Activated B cell treated with CpG ODN at 0.5 μM for 24 hours (primary cell): ENCODE measurements at regions of chr9 and their contacts with region 1.

Region 1: DNA sequence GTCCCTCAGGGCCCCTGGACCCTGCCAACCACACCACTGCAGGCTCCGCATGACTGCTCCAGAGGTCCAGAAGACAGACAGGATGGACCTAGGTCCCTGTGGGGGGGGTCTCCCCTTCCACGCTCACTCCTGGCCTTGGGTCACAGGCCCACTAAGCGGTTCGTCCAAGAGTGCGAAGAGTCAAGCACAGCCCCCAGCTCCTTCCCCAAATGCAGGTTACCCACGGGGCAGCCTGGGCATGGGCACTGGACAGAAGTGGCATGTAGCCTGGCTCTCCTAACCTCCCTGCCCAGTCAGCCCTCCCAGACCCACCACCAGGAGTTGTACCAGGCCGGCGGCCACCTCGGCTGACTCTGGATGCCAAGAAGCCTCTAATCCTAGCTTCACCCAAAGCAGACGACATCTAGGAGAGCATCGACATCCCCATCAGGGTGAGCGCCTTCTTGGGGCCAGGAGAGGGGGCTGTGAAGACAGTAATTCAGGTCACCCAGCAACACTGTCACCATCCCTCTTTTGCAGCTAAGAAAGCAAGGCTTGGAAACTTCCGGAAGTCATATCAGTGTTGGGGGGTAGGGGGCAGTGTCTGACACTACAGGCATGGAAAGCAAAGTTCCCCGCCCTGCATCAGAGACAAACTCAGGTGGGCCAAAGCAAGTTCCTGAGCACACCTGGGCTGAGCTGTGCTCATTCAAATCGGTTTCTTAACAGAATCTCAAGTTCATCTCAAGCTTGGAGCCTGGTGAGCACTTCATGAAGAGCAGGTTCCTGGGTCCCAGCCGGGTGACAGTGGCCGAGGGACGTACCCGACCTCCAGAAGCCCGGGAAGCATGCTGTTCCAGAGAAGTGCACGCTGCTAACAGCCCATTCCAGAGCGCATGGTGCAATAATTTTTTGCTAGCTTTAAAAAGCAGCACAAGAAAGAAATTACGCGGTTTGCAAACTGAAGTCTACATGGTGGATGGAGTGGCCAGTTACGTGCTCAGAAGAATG is 68.7 kb downstream of the SEMA4D start:
- DNase-seq: no peak
- ATAC-seq: peak; percentile 48
- H3K4me3 Mint-ChIP-seq: no peak overlapping the region
- H3K27ac Mint-ChIP-seq: peak overlapping the region; percentile 63
- H3K4me1 Mint-ChIP-seq: peaks cover 93% of the 10 kb centered on the region
- H3K27me3 Mint-ChIP-seq: no peaks in the 10 kb centered on the region
- CTCF ChIP-seq: no peak

Region 2: DNA sequence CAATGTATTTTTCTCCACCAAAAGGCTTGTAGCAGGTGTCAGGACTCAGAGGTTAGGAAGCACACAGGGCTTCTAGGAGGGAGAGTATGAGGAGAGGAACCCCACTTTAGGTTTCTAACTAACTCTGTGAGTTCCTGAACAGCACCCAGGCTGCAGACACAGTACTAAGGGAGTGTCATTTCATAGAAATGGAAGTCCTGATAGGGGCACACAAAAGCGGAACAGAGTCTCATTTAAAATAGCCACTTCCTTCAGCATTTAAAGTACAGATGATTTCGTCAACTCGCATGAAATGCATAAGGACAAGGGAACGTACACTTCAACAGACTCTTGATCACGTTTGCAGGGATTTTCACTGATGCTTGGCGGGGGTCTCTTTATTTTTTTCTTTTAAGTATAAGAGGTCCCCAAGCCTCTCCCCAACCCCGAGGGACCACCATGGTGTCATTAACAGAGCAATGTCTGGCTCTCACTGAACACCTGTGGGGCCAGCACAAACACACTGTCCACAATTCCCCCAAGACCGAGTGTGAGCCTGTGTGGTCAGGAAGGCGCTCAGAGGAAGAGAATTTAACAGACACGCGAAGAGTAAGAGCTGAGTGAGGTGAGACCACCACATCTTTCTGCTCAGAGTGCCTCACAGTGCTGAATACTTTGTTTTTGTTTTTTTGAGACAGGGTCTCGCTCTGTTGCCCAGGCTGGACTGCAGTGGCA is 28.6 kb before region 1 on chr9:
- CTCF ChIA-PET with region 1: interaction called, 4 read pairs
- POLR2A ChIA-PET with region 1: interaction called, 12 read pairs
- intact Hi-C with region 1: loop called (anchors 2 kb)
- DNase-seq: peak; percentile 35
- ATAC-seq: peak; percentile 83
- H3K4me3 Mint-ChIP-seq: peak overlapping the region; percentile 68
- H3K27ac Mint-ChIP-seq: peak overlapping the region; percentile 90
- H3K4me1 Mint-ChIP-seq: peaks cover 62% of the 10 kb centered on the region
- H3K27me3 Mint-ChIP-seq: no peaks in the 10 kb centered on the region
- CTCF ChIP-seq: no peak

Region 3: GRCh38 chr9:89418882-89419640 is 10.1 kb before region 1 on chr9:
- CTCF ChIA-PET with region 1: interaction called, 5 read pairs
- POLR2A ChIA-PET with region 1: interaction called, 4 read pairs
- intact Hi-C with region 1: loop called (anchors 1 kb)
- DNase-seq: peak; percentile 53
- ATAC-seq: peak; percentile 83
- H3K4me3 Mint-ChIP-seq: peak overlapping the region; percentile 84
- H3K27ac Mint-ChIP-seq: peak overlapping the region; percentile 94
- H3K4me1 Mint-ChIP-seq: peaks cover 73% of the 10 kb centered on the region
- H3K27me3 Mint-ChIP-seq: no peaks in the 10 kb centered on the region
- CTCF ChIP-seq: no peak

Region 4: GRCh38 chr9:89483592-89484522 is 54.7 kb after region 1 on chr9:
- CTCF ChIA-PET with region 1: no interaction called
- POLR2A ChIA-PET with region 1: no interaction called
- intact Hi-C with region 1: loop called (anchors 2 kb)
- DNase-seq: peak; percentile 52
- ATAC-seq: peak; percentile 82
- H3K4me3 Mint-ChIP-seq: peak overlapping the region; percentile 80
- H3K27ac Mint-ChIP-seq: peak overlapping the region; percentile 79
- H3K4me1 Mint-ChIP-seq: peaks cover 79% of the 10 kb centered on the region
- H3K27me3 Mint-ChIP-seq: no peaks in the 10 kb centered on the region
- CTCF ChIP-seq: no peak

Region 5: GRCh38 chr9:89522261-89522958 is 93.2 kb after region 1 on chr9:
- CTCF ChIA-PET with region 1: interaction called, 10 read pairs
- POLR2A ChIA-PET with region 1: no interaction called
- intact Hi-C with region 1: no loop called
- DNase-seq: peak; percentile 49
- ATAC-seq: peak; percentile 93
- H3K4me3 Mint-ChIP-seq: peak overlapping the region; percentile 78
- H3K27ac Mint-ChIP-seq: peak overlapping the region; percentile 96
- H3K4me1 Mint-ChIP-seq: peaks cover 85% of the 10 kb centered on the region
- H3K27me3 Mint-ChIP-seq: no peaks in the 10 kb centered on the region
- CTCF ChIP-seq: no peak